BJ (cell line): ENCODE measurements at regions of chrX and their contacts with region 1.

Region 1: DNA sequence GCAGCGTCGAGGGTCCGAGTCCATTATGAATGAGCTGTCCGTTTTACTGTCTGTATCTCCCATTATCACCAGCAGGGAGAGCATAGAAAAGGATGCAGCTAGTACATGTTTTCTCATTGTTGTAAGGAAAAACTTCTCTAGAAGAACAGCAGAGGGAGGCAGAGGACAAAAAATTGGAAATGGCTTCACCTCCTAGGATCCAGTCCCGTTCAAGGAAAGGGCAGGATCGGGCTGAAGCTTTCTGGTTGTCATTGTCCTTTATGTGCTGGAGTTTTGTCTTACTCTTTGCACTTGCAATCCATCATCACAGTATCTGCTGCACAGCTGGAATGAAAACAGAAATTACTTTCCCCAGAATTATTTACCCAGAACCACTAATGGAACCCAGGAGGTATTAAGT is 14.7 kb downstream of the NDP start:
- DNase-seq: peak; percentile 19
- H3K4me3 ChIP-seq: no peak overlapping the region
- H3K27me3 ChIP-seq: no peaks in the 10 kb centered on the region
- CTCF ChIP-seq: peak; percentile 66

Region 2: GRCh38 chrX:43973249-43974099 is 14.9 kb after region 1 on chrX and contains the start of gene NDP:
- CTCF ChIA-PET with region 1: interaction called, 11 read pairs
- POLR2A ChIA-PET with region 1: no interaction called
- DNase-seq: no peak
- H3K4me3 ChIP-seq: peak within 1 kb of the TSS; percentile 20
- H3K27me3 ChIP-seq: no peaks in the 10 kb centered on the region
- CTCF ChIP-seq: no peak
- polyA plus RNA-seq, gene NDP: not detected in 2 replicates

Region 3: DNA sequence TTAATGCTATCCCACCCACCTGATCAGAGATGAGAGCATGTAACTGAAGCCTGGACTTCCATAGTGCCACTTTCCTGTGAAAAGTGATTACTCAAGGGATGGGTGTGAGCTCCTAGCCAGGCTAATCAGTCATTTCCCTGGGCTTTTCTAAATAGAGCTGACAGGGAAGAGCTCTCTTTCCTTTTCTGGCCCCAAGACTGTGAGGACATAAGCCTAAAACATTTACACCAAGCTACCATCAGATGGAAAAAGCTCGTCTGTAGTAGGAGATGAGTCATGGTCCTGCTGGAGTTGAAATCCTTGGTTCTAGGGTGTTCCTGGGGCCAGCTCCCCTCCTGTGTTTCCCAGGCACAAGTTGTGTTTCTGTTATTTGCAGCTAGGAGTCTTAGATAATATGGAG is 67.0 kb after region 1 on chrX:
- CTCF ChIA-PET with region 1: interaction called, 19 read pairs
- POLR2A ChIA-PET with region 1: no interaction called
- DNase-seq: no peak
- H3K4me3 ChIP-seq: no peak overlapping the region
- H3K27me3 ChIP-seq: no peaks in the 10 kb centered on the region
- CTCF ChIP-seq: no peak

Region 4: DNA sequence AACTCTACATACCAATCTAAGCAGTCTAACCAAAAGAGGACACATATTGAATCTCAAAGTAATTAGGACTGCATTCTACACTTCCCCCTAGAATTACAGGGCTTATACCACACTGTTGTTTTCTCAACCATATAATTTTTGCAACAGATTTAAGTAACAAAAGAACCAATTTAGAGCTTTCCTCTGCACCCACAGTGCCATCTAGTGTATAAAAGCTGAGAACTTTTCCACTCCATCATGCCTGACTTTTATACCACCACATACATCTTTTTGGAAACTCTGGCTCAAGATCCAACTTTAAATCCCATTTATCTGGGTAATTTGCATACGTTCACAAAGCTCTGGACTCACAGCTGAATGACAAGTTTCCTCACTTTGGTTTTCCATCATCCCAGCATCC is 285.5 kb after region 1 on chrX:
- CTCF ChIA-PET with region 1: interaction called, 42 read pairs
- POLR2A ChIA-PET with region 1: no interaction called
- DNase-seq: no peak
- H3K4me3 ChIP-seq: no peak overlapping the region
- H3K27me3 ChIP-seq: no peaks in the 10 kb centered on the region
- CTCF ChIP-seq: peak; percentile 41; the same call in 1 of the 2 replicates